HEK293T (cell line): ENCODE measurements at regions of chr5 and their contacts with region 1.

Region 1: GRCh38 chr5:10364186-10364683 is 10.7 kb downstream of the MARCHF6 start:
- DNase-seq: no peak

Region 2: DNA sequence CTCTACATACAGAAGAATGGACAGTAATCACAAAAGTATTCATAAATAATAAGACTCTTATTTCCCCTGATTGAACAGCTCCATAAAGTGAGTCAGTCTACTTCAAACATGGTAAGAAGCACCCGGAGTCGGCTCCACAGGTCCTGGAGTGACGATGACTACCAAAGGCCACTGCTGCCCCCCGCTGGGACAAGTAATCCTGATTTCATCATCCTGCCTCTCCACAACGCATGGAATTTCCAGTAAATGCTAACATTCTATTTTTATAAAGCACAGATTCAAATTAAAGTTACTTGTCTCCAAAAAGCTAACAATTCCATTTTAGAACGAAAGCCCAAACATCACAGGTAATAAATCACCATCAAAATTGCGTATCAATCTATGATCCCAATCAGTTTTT is 130.7 kb before region 1 on chr5:
- CTCF ChIA-PET with region 1: no interaction called
- POLR2A ChIA-PET with region 1: no interaction called
- DNase-seq: peak; percentile 31

Region 3: DNA sequence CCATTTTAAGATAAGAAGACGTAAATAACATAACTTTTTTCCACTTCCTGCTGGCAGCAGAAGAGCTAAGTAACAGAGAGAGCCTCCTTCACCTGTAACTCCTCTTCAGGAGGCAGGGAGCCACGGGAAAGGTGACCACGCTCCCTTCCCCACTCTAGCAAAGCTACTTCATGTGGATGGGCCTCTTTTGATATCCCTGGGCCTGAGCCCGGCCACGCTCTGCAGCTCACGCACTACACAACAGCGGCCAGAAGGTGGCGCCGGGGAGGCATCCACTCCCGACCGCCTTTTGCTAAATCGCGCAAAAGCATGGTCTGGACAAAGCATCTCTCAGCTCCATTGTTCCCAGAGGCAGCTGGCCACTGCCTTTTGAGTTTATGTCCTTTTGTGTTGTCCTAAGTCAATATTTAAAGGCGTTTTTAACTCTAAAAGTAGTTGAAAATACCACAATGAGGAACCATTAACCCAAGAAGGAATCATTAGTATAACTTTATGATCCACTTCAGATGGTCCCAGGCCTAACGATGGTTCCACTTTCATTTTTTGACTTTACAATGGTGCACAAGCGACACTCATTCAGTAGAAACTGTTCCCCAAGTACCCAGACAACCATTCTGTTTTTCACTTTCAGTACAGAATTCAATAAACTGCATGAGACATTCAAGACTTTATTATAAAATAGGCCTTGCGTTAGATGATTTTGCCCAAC is 80.2 kb before region 1 on chr5:
- CTCF ChIA-PET with region 1: interaction called, 11 read pairs
- POLR2A ChIA-PET with region 1: no interaction called
- DNase-seq: peak; percentile 82